ENCODE measurements at regions of chr1 and their contacts with region 1.

Region 1: GRCh38 chr1:237901299-237901934 is 10.7 kb upstream of the ZP4 start:
- H3K4me3 ChIP-seq: no peak overlapping the region
- H3K27ac ChIP-seq: no peak overlapping the region
- H3K4me1 ChIP-seq: no peaks in the 10 kb centered on the region
- CTCF ChIP-seq: no peak

Region 2: GRCh38 chr1:237640011-237640671 is 261.3 kb before region 1 on chr1:
- CTCF ChIA-PET with region 1: no interaction called
- POLR2A ChIA-PET with region 1: no interaction called
- H3K4me3 ChIP-seq: no peak overlapping the region
- H3K27ac ChIP-seq: no peak overlapping the region
- H3K4me1 ChIP-seq: no peaks in the 10 kb centered on the region
- CTCF ChIP-seq: no peak

Region 3: GRCh38 chr1:237873487-237874211 is 27.8 kb before region 1 on chr1:
- CTCF ChIA-PET with region 1: interaction called, 14 read pairs
- POLR2A ChIA-PET with region 1: no interaction called
- H3K4me3 ChIP-seq: no peak overlapping the region
- H3K27ac ChIP-seq: no peak overlapping the region
- H3K4me1 ChIP-seq: peaks cover 12% of the 10 kb centered on the region
- CTCF ChIP-seq: no peak

Region 4: DNA sequence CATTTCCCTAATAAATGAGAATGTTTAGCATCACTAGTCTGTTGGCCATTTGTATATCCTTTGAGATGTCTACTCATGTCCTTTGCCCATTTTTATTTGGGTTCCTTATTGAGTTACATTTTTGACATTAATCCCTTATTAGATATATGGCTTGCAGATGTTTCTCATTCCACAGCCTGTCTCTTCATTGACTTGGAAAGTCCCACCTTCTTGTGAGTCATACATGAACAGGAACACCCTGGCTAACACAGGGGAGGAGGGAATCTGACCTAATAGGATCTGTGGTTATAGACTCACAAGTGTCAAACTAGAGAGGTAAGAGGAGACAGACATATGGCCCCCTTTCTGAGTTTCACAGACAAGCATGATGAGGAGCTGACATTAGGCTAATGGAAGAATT is 22.2 kb before region 1 on chr1:
- CTCF ChIA-PET with region 1: interaction called, 14 read pairs
- POLR2A ChIA-PET with region 1: no interaction called
- H3K4me3 ChIP-seq: no peak overlapping the region
- H3K27ac ChIP-seq: no peak overlapping the region
- H3K4me1 ChIP-seq: no peaks in the 10 kb centered on the region
- CTCF ChIP-seq: no peak

Region 5: GRCh38 chr1:237911911-237912310 is 10.5 kb after region 1 on chr1:
- CTCF ChIA-PET with region 1: interaction called, 12 read pairs
- POLR2A ChIA-PET with region 1: no interaction called
- H3K4me3 ChIP-seq: no peak overlapping the region
- H3K27ac ChIP-seq: no peak overlapping the region
- H3K4me1 ChIP-seq: no peaks in the 10 kb centered on the region
- CTCF ChIP-seq: no peak

Measured in HEK293 (cell line).